ENCODE measurements at regions of chr16 and their contacts with region 1.

Region 1: GRCh38 chr16:83952940-83953795 is at the start of gene OSGIN1:
- DNase-seq: peak; percentile 95 to 97
- ATAC-seq: peak; percentile 85 to 89
- H3K4me3 ChIP-seq: peak within 1 kb of the TSS; percentile 66 to 88 (median 77)
- H3K27ac ChIP-seq: peak within 1 kb of the TSS; percentile 93 to 100 (median 97)
- H3K4me1 ChIP-seq: peaks cover 32 to 48% of the 10 kb centered on the region in 2 donors
- H3K27me3 ChIP-seq: no peaks in the 10 kb centered on the region
- CTCF ChIP-seq: peak in 1 of 5 experiments; percentile 7
- POLR2A ChIP-seq: peak; percentile 95 to 96
- total RNA-seq, gene OSGIN1: 9.6 to 24.9 (median 13.2) TPM

Region 2: GRCh38 chr16:83826146-83826913 is 126.8 kb before region 1 on chr16:
- in situ Hi-C with region 1: loop called in 1 of 4 experiments (anchors 25 kb)
- intact Hi-C with region 1: loop called (anchors 2 kb)
- DNase-seq: peak; percentile 82 to 86
- ATAC-seq: peak; percentile 100
- H3K4me3 ChIP-seq: peak overlapping the region in 1 of 4 donors; percentile 35
- H3K27ac ChIP-seq: peak overlapping the region; percentile 6 to 54 (median 44)
- H3K4me1 ChIP-seq: peaks cover 0 to 5% of the 10 kb centered on the region in 2 donors
- H3K27me3 ChIP-seq: no peaks in the 10 kb centered on the region
- CTCF ChIP-seq: peak; percentile 89 to 94 (median 93)
- POLR2A ChIP-seq: no peak

Region 3: DNA sequence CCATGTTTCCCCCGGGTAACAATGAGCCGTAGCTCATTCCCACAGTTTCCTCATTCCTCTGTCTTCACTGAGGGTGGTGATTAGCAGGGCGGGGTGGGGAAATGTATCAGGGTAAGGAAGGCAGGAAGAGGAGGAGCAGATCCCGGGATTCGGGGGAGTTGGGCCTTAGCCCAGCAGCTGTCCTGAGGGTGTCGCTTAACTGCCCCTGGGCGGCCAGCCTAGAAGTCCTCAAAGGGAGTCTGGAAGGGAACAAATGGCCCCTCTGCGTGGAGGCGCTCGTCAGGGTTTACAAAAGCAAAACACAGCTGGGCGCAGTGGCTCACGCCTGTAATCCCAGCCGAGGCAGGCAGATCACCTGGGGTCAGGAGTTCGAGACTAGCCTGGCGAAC is 39.9 kb before region 1 on chr16:
- in situ Hi-C with region 1: no loop called
- intact Hi-C with region 1: loop called (anchors 1 kb)
- DNase-seq: peak; percentile 30 to 94
- ATAC-seq: peak; percentile 50 to 79
- H3K4me3 ChIP-seq: no peak overlapping the region
- H3K27ac ChIP-seq: peak overlapping the region; percentile 85 to 96 (median 92)
- H3K4me1 ChIP-seq: peaks cover 22 to 33% of the 10 kb centered on the region in 2 donors
- H3K27me3 ChIP-seq: no peaks in the 10 kb centered on the region
- CTCF ChIP-seq: no peak
- POLR2A ChIP-seq: no peak

Region 4: GRCh38 chr16:84062734-84063640 is 109.8 kb after region 1 on chr16:
- in situ Hi-C with region 1: loop called in 2 of 4 experiments (anchors 10 to 25 kb)
- intact Hi-C with region 1: loop called (anchors 2 kb)
- DNase-seq: peak; percentile 22 to 67
- ATAC-seq: peak; percentile 76 to 78
- H3K4me3 ChIP-seq: no peak overlapping the region
- H3K27ac ChIP-seq: no peak overlapping the region
- H3K4me1 ChIP-seq: no peaks in the 10 kb centered on the region
- H3K27me3 ChIP-seq: no peaks in the 10 kb centered on the region
- CTCF ChIP-seq: peak; percentile 74 to 89 (median 83)
- POLR2A ChIP-seq: no peak

Region 5: DNA sequence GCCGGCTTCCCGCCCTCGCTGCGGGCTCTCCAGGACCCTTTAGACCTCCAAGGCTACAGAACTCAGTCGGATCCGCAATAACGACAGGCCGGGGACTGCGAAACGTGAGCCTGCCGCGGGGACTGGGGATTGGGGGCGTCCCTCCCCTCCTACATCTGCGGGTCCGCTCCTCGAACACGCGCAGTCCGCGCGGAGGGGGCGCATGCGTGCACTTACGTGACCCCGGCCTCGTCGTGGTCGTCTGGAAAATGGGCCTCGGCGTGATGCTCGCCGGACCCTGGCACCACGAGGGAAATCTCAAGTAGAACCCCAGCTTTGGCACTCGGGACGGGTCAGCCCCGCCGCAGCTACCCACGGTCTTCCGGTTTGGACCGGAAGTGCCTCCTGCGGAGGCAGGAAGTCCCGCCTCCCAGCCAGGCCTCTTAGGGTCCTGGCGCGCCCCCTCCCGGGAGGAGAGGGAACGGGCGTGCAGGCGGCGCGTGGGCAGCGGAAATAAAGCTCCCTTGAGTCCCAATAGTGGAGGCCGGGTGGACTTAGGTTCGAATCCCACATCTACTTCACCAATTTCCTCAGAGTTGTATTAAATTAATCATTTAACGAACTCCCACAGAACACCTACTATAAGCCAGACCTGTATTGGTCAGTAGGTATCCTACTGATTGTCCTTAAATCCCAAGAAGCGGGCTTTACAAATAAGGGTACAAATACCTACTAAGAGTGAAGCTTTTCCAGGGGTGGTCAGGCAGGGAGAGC is 233.7 kb after region 1 on chr16 and contains the start of gene TAF1C:
- in situ Hi-C with region 1: loop called in 2 of 4 experiments (anchors 10 to 25 kb)
- intact Hi-C with region 1: no loop called
- DNase-seq: peak; percentile 74 to 92
- ATAC-seq: peak; percentile 91 to 97
- H3K4me3 ChIP-seq: peak within 1 kb of the TSS; percentile 74 to 100 (median 98)
- H3K27ac ChIP-seq: peak within 1 kb of the TSS; percentile 81 to 86 (median 82)
- H3K4me1 ChIP-seq: peaks cover 0 to 8% of the 10 kb centered on the region in 2 donors
- H3K27me3 ChIP-seq: no peaks in the 10 kb centered on the region
- CTCF ChIP-seq: peak; percentile 92 to 97 (median 96)
- POLR2A ChIP-seq: peak; percentile 10 to 34
- total RNA-seq, gene TAF1C: 6.8 to 35.5 (median 12.3) TPM

Region 6: DNA sequence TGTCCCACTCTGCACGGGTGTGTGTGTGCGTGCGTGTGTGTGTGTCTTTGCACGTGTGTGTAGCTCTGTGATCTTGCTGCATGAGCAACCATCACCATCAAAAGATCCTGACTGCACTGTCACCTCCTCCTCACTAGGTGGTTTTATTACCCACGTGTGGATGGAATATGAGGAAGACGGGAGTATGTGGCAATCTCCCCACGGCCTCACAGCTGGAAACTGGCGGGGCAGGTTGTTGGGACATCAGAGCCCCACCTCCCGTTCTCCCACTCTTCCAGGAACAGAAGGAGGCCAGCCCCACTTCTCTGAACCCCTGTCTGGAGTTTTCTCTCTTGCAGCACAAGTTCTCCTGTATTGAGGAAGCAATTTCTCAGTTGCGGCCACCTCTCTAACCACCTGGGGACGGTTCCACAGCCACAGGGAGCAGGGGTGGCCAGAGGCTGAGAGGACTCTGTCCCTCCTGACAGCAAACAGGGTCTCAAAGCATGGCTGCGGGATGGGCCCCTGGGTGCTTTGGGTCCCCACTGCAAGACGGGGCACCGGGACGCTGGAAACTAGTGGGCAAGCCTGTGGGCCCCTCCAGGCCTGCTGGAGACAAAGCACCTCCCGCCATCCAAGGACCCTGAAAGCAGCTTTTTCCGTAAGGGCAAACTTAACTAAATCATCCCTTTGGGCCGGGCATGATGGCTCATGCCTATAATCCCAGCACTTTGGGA is 387.3 kb after region 1 on chr16:
- in situ Hi-C with region 1: no loop called
- intact Hi-C with region 1: no loop called
- DNase-seq: no peak
- ATAC-seq: no peak
- H3K4me3 ChIP-seq: no peak overlapping the region
- H3K27ac ChIP-seq: no peak overlapping the region
- H3K4me1 ChIP-seq: no peaks in the 10 kb centered on the region
- H3K27me3 ChIP-seq: no peaks in the 10 kb centered on the region
- CTCF ChIP-seq: no peak
- POLR2A ChIP-seq: no peak

Region 7: GRCh38 chr16:84504420-84505248 is 551.5 kb after region 1 on chr16 and contains the start of gene MEAK7:
- in situ Hi-C with region 1: loop called in 2 of 4 experiments (anchors 25 kb)
- intact Hi-C with region 1: loop called (anchors 5 kb)
- DNase-seq: peak; percentile 97 to 98
- ATAC-seq: peak; percentile 97 to 98
- H3K4me3 ChIP-seq: peak within 1 kb of the TSS; percentile 79 to 95 (median 90)
- H3K27ac ChIP-seq: peak within 1 kb of the TSS; percentile 89 to 94 (median 92)
- H3K4me1 ChIP-seq: peaks cover 14 to 27% of the 10 kb centered on the region in 2 donors
- H3K27me3 ChIP-seq: no peaks in the 10 kb centered on the region
- CTCF ChIP-seq: no peak
- POLR2A ChIP-seq: peak; percentile 75 to 76
- total RNA-seq, gene MEAK7: 2.6 to 7.1 (median 5.0) TPM

Measured in gastrocnemius medialis (tissue), 4 donors.